ENCODE measurements at regions of chr16 and their contacts with region 1.

Region 1: GRCh38 chr16:89357055-89357816 is 133.1 kb downstream of the ANKRD11 start:
- DNase-seq: peak in 1 of 2 donors; percentile 68
- ATAC-seq: peak; percentile 43 to 69 (median 60)
- H3K4me3 ChIP-seq: no peak overlapping the region
- H3K27ac ChIP-seq: peak overlapping the region in 4 of 10 donors; percentile 4 to 46 (median 24)
- H3K4me1 ChIP-seq: peaks cover 48 to 100% (median 96%) of the 10 kb centered on the region in 9 donors
- H3K27me3 ChIP-seq: no peaks in the 10 kb centered on the region
- CTCF ChIP-seq: peak in 4 of 9 donors; percentile 20 to 48 (median 32)

Region 2: GRCh38 chr16:89409161-89409711 is 52.0 kb after region 1 on chr16:
- intact Hi-C with region 1: loop called in 1 of 10 experiments (anchors 10 kb)
- DNase-seq: no peak
- ATAC-seq: peak in 2 of 8 donors; percentile 10 to 13
- H3K4me3 ChIP-seq: no peak overlapping the region
- H3K27ac ChIP-seq: peak overlapping the region in 2 of 10 donors; percentile 26 to 52
- H3K4me1 ChIP-seq: peaks cover 57 to 99% (median 94%) of the 10 kb centered on the region in 9 donors
- H3K27me3 ChIP-seq: no peaks in the 10 kb centered on the region
- CTCF ChIP-seq: no peak

Measured in heart right ventricle (tissue), 16 donors.